Activated CD8-positive, alpha-beta memory T cell treated with anti-CD3 and anti-CD28 coated beads, Interleukin-2, amount 10 ng/mL, durations not matched to agents 7 days and 5 days (primary cell): ENCODE measurements at regions of chr6 and their contacts with region 1.

Region 1: GRCh38 chr6:32153564-32154513 is at the start of gene PPT2:
- DNase-seq: peak; percentile 89
- ATAC-seq: peak; percentile 67
- H3K4me3 Mint-ChIP-seq: peak within 1 kb of the TSS; percentile 86
- H3K27ac Mint-ChIP-seq: peak within 1 kb of the TSS; percentile 83
- H3K4me1 Mint-ChIP-seq: peaks cover 26% of the 10 kb centered on the region
- H3K27me3 Mint-ChIP-seq: peaks cover 33% of the 10 kb centered on the region
- total RNA-seq, gene PPT2: 13.9 to 21.9 TPM

Region 2: DNA sequence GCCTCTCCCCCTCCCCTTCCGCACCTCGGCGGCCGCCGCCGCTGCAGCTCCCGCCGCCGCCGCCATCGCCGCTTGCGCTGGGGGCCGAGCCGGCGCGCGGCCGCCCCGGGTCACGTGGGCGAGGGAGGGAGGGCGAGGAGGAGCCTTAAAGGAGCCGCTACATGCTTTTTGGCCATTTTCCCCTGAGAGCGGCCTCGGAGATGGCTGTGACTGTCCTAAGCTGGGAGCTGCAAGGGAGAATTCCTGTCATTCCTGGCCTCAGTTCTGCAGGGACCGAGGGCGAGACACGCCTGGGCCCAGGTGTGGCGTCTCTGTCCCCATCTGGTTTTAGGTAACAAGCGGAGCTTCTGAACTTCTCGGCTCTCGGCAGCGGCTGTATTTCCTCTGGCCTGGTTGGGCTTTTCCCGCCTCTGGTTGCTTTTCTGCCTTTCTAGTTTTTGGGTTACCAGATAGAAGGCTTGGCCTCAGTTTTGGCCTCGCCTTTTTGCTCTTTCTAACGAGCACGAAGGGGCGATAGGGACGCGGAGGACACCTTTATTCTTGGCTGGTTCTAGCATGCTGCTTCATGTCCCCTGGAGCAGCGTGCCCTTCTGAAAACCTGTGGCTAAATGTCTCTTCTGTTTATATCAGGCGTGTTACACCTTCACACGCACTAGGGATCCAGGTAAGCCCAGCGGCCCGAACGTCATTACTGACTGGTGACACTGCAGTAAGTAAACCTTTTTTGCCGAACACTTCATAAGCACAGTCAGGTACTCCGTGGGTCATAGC is 256.0 kb before region 1 on chr6 and contains the start of gene EHMT2:
- CTCF ChIA-PET with region 1: no interaction called
- DNase-seq: peak; percentile 91
- ATAC-seq: peak; percentile 78
- H3K4me3 Mint-ChIP-seq: peak within 1 kb of the TSS; percentile 93
- H3K27ac Mint-ChIP-seq: peak within 1 kb of the TSS; percentile 95
- H3K4me1 Mint-ChIP-seq: peaks cover 51% of the 10 kb centered on the region
- H3K27me3 Mint-ChIP-seq: peaks cover 4% of the 10 kb centered on the region
- total RNA-seq, gene EHMT2: 78.7 to 79.0 TPM

Region 3: GRCh38 chr6:32070814-32071543 is 82.9 kb before region 1 on chr6:
- CTCF ChIA-PET with region 1: no interaction called
- DNase-seq: no peak
- ATAC-seq: no peak
- H3K4me3 Mint-ChIP-seq: no peak overlapping the region
- H3K27ac Mint-ChIP-seq: no peak overlapping the region
- H3K4me1 Mint-ChIP-seq: no peaks in the 10 kb centered on the region
- H3K27me3 Mint-ChIP-seq: peaks cover 3% of the 10 kb centered on the region

Region 4: GRCh38 chr6:32118782-32119628 is 34.8 kb before region 1 on chr6:
- CTCF ChIA-PET with region 1: interaction called, 10 read pairs
- DNase-seq: peak; percentile 80
- ATAC-seq: peak; percentile 91
- H3K4me3 Mint-ChIP-seq: no peak overlapping the region
- H3K27ac Mint-ChIP-seq: peak overlapping the region; percentile 30
- H3K4me1 Mint-ChIP-seq: peaks cover 3% of the 10 kb centered on the region
- H3K27me3 Mint-ChIP-seq: no peaks in the 10 kb centered on the region